ENCODE measurements at regions of chr18 and their contacts with region 1.

Region 1: GRCh38 chr18:21281611-21282010 is 39.6 kb downstream of the GREB1L start:
- DNase-seq: no peak
- H3K4me3 ChIP-seq: no peak overlapping the region
- CTCF ChIP-seq: no peak
- POLR2A ChIP-seq: no peak

Region 2: DNA sequence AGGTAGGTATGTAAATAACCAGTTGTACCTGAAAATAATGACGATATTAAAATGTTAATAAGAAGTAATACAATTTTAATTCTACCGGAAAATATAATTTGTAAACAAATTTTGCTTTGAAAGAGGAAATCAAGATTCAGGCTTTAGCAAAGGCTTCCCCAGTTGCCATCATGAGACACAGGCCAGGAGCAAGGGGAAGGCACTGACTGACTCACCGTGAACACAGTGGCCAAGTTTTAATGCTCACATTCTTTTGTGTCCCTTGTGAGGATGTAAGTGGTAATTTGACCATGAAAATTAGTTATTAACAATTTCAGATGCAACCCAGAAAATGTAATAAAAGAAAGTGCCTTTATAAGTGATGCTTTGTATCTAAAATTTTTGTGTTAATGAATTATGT is 124.5 kb after region 1 on chr18:
- intact Hi-C with region 1: loop called (anchors 10 kb)
- DNase-seq: no peak
- H3K4me3 ChIP-seq: no peak overlapping the region
- CTCF ChIP-seq: no peak
- POLR2A ChIP-seq: no peak

Measured in lower leg skin (tissue), 4 donors.